Activated B cell treated with CpG ODN at 0.5 μM for 24 hours (primary cell): ENCODE measurements at regions of chr3 and their contacts with region 1.

Region 1: DNA sequence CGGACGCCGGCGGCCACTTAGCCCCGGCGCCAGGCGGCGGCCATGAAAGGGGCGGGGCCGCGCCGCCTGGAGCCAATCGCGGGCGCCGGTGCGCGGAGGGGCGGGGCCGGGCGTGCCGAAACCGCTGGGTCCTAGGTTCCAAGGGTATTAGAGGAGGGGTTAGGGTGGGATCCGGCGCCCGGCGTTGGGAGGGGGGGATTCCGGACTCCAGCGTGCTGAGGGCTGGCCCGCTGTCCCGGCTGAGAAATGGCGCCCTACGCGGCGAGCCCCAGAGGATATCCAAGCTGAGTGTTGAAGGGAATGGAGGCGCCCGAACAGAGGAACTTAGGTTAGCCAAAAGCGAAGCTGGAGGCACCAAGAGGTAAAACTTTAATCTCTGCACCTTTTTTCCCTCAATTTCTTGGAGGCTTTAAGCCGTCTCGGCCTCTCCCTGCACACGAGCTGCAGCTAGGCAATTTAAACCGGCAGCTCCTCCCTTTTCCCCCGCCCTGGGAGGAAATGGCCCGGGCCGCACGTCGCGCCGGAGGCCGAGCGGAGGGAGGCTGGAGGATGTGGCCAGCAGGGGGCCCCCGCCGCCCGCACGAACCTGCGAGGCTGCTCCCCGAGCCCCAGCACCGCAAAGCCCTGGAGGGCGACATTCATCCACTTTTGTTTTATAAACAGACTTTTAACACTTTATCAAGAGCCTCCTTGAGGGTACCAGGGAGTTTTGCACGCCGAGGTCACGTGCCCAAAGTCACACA is at the start of gene XXYLT1:
- DNase-seq: peak; percentile 84
- ATAC-seq: peak; percentile 87
- H3K4me3 Mint-ChIP-seq: peak within 1 kb of the TSS; percentile 87
- H3K27ac Mint-ChIP-seq: peak within 1 kb of the TSS; percentile 82
- H3K4me1 Mint-ChIP-seq: peaks cover 20% of the 10 kb centered on the region
- H3K27me3 Mint-ChIP-seq: no peaks in the 10 kb centered on the region
- CTCF ChIP-seq: peak; percentile 77
- total RNA-seq, gene XXYLT1: 7.6 and 7.9 TPM in 2 replicates

Region 2: DNA sequence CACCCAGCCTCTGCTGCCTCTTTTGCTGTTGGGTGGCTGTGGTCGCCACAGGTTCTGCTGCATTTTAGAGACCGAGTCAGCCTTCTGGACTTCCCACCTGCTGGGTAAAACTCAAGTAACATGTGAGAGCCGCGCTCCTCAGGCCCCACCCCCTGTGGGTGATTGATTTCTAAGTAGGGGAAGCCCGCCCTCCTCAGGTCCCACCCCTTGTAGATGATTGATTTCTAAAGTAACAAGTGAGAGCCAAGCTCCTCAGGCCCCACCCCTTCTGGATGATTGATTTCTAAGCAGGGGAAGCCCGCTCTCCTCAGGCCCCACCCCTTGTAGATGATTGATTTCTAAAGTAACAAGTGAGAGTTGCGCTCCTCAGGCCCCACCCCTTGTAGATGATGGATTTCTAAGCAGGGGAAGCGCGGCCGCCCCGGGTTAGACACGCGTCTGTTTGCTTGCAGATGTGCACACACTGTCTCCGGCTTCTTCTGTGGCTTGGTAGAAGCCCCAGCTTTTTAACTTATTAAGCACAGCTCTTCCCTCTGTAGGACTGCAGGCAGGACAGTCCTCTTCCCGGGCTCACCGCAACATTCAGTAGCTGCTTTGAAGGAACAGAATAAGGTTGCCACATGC is 502.2 kb before region 1 on chr3:
- CTCF ChIA-PET with region 1: interaction called, 4 read pairs
- POLR2A ChIA-PET with region 1: interaction called, 8 read pairs
- intact Hi-C with region 1: loop called (anchors 2 kb)
- DNase-seq: peak; percentile 69
- ATAC-seq: peak; percentile 98
- H3K4me3 Mint-ChIP-seq: peak overlapping the region; percentile 86
- H3K27ac Mint-ChIP-seq: peak overlapping the region; percentile 94
- H3K4me1 Mint-ChIP-seq: peaks cover 34% of the 10 kb centered on the region
- H3K27me3 Mint-ChIP-seq: peaks cover 5% of the 10 kb centered on the region
- CTCF ChIP-seq: no peak

Region 3: DNA sequence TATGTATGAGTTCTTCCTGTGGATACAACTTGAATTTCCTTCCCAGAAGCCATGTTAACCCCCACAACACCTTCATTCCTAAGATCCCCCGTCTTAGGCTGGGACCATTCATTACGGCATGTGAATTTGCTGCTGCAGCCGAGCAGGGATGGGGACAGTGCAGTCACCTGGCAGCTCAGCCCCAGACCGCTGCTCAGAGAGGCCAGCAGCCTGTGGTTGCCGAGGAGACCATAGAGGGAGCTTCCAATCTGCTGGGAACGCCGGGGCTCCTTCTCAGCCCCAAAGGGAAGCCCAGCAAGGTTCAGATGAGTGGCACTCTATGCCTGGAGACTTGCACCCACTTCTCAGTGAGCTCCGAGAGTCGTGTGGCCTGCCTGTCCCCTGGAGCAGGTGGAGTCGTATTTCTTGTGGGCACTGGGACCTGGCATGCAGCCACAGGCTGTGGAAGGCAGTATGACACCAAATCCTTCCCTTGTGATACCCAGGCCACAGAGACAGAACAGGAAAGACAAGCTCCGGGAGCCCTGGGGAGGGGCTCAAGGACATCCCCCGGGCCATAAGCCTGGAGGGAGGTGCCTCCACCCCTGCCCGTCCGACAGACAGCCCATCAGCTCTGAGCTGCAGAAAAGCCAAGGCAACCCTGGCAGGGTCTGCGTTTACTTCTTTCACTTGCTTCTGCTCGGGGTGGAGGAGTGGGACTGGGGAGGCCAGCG is 418.3 kb before region 1 on chr3:
- CTCF ChIA-PET with region 1: no interaction called
- POLR2A ChIA-PET with region 1: no interaction called
- intact Hi-C with region 1: no loop called
- DNase-seq: no peak
- ATAC-seq: no peak
- H3K4me3 Mint-ChIP-seq: no peak overlapping the region
- H3K27ac Mint-ChIP-seq: no peak overlapping the region
- H3K4me1 Mint-ChIP-seq: no peaks in the 10 kb centered on the region
- H3K27me3 Mint-ChIP-seq: no peaks in the 10 kb centered on the region
- CTCF ChIP-seq: no peak

Region 4: DNA sequence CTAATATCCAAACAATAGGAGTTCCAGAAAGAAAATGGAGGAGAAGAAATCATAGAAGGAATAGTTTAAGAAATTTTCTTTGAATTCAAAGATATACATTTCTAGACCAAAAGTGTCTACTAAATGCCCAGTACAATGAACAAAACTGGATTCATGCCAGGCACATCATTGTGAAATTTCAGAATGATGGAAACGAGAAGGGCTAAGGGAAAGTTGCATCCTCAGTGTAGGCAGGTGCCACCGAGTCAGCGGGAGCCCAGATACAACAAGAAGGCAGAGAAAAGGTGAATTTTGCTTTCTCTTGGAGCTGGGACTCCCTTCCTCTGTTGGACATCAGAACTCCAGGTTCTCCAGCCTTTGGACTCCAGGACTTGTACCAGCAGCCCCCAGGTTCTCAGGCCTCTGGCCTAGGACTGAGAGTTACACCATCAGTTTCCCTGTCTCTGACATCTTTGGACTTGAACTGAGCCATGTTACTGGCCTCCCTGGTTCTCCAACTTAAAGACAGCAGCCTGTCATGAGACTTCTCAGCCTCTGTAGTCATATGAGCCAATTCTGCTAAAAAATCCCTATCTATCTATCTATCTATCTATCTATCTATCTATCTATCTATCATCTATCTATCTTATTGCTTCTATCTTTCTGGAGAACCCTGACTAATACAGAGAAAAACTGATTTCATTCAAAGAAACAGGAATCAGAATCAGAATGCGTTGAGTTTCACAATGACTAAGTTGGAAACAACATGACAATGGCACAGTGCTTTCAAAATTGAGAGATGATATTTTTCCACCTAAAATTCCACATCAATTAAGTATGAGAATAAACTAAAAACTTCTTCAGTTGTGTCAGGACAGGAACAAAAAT is 377.9 kb before region 1 on chr3:
- CTCF ChIA-PET with region 1: no interaction called
- POLR2A ChIA-PET with region 1: no interaction called
- intact Hi-C with region 1: no loop called
- DNase-seq: no peak
- ATAC-seq: no peak
- H3K4me3 Mint-ChIP-seq: no peak overlapping the region
- H3K27ac Mint-ChIP-seq: no peak overlapping the region
- H3K4me1 Mint-ChIP-seq: peaks cover 14% of the 10 kb centered on the region
- H3K27me3 Mint-ChIP-seq: no peaks in the 10 kb centered on the region
- CTCF ChIP-seq: no peak

Region 5: GRCh38 chr3:195522254-195523023 is 251.2 kb after region 1 on chr3:
- CTCF ChIA-PET with region 1: interaction called, 70 read pairs
- POLR2A ChIA-PET with region 1: interaction called, 7 read pairs
- intact Hi-C with region 1: loop called (anchors 1 kb)
- DNase-seq: no peak
- ATAC-seq: peak; percentile 10
- H3K4me3 Mint-ChIP-seq: no peak overlapping the region
- H3K27ac Mint-ChIP-seq: peak overlapping the region; percentile 22
- H3K4me1 Mint-ChIP-seq: peaks cover 13% of the 10 kb centered on the region
- H3K27me3 Mint-ChIP-seq: no peaks in the 10 kb centered on the region
- CTCF ChIP-seq: peak; percentile 85

Region 6: GRCh38 chr3:195850857-195851543 is 579.7 kb after region 1 on chr3:
- CTCF ChIA-PET with region 1: interaction called, 3 read pairs
- POLR2A ChIA-PET with region 1: no interaction called
- intact Hi-C with region 1: loop called (anchors 1 kb)
- DNase-seq: peak; percentile 61
- ATAC-seq: peak; percentile 100
- H3K4me3 Mint-ChIP-seq: peak overlapping the region; percentile 35
- H3K27ac Mint-ChIP-seq: no peak overlapping the region
- H3K4me1 Mint-ChIP-seq: peaks cover 10% of the 10 kb centered on the region
- H3K27me3 Mint-ChIP-seq: peaks cover 11% of the 10 kb centered on the region
- CTCF ChIP-seq: peak; percentile 100